SK-N-SH (cell line): ENCODE measurements at regions of chr6 and their contacts with region 1.

Region 1: GRCh38 chr6:35731736-35732532 is 4.9 kb upstream of the ARMC12 start:
- DNase-seq: peak; percentile 91
- H3K4me3 ChIP-seq: peak overlapping the region; percentile 76 to 89
- H3K27ac ChIP-seq: peak overlapping the region; percentile 92 to 98
- H3K4me1 ChIP-seq: peaks cover 5 to 34% of the 10 kb centered on the region in 2 experiments; a peak in 2 of 4 replicates
- H3K27me3 ChIP-seq: no peaks in the 10 kb centered on the region
- CTCF ChIP-seq: no peak
- EP300 ChIP-seq: peak in 1 of 2 experiments; percentile 58; a peak in 2 of 4 replicates
- RAD21 ChIP-seq: peak; percentile 27

Region 2: GRCh38 chr6:35496841-35497570 is 234.9 kb before region 1 on chr6 and contains the start of gene TEAD3:
- CTCF ChIA-PET with region 1: interaction called, 10 read pairs
- POLR2A ChIA-PET with region 1: no interaction called
- DNase-seq: peak; percentile 97
- H3K4me3 ChIP-seq: peak within 1 kb of the TSS; percentile 66 to 79
- H3K27ac ChIP-seq: peak within 1 kb of the TSS; percentile 35 to 82; a peak in 3 of 4 replicates
- H3K4me1 ChIP-seq: peaks cover 12 to 50% of the 10 kb centered on the region in 2 experiments; a peak in 2 of 4 replicates
- H3K27me3 ChIP-seq: no peaks in the 10 kb centered on the region
- CTCF ChIP-seq: peak; percentile 27
- EP300 ChIP-seq: no peak
- RAD21 ChIP-seq: no peak
- polyA plus RNA-seq, gene TEAD3: 5.2 and 7.1 TPM in 2 replicates

Region 3: DNA sequence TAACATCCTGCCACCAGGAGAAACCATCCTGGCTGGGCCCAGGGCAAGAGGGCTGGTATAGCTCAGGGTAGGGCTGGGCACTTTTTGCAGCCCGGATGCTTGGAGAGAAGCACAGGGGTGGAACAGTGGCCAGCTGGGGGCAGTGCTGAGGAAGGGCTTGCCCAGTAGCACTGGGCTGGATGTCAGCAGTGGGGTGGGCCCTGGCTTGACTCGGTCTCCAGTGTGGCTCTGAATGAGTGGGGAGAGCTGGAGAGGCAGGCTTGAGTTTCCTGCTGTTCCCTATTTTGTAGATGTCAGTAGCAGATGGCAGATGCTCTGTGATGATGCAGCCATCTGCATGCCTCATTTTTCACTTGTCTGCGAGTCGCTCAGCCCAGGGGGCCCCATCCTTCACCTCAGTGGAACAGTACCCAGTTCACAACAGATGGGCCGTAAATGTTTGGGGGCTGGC is 162.9 kb before region 1 on chr6:
- CTCF ChIA-PET with region 1: interaction called, 24 read pairs
- POLR2A ChIA-PET with region 1: no interaction called
- DNase-seq: peak; percentile 30
- H3K4me3 ChIP-seq: no peak overlapping the region; a peak in 1 of 4 replicates
- H3K27ac ChIP-seq: no peak overlapping the region
- H3K4me1 ChIP-seq: peaks cover 0 to 4% of the 10 kb centered on the region in 2 experiments; a peak in 1 of 4 replicates
- H3K27me3 ChIP-seq: peaks cover 4% of the 10 kb centered on the region
- CTCF ChIP-seq: peak; percentile 44
- EP300 ChIP-seq: no peak
- RAD21 ChIP-seq: 0 out of 2 replicates have a peak, but pooled peaks have one; percentile 9

Region 4: GRCh38 chr6:35601331-35602132 is 130.4 kb before region 1 on chr6:
- CTCF ChIA-PET with region 1: interaction called, 42 read pairs
- POLR2A ChIA-PET with region 1: no interaction called
- DNase-seq: peak; percentile 58
- H3K4me3 ChIP-seq: peak overlapping the region; percentile 33 to 47
- H3K27ac ChIP-seq: peak overlapping the region; percentile 88 to 98
- H3K4me1 ChIP-seq: peaks cover 30 to 50% of the 10 kb centered on the region in 2 experiments
- H3K27me3 ChIP-seq: no peaks in the 10 kb centered on the region
- CTCF ChIP-seq: no peak
- EP300 ChIP-seq: peak in 1 of 2 experiments; percentile 75; a peak in 2 of 4 replicates
- RAD21 ChIP-seq: no peak

Region 5: GRCh38 chr6:35681298-35681697 is 50.6 kb before region 1 on chr6:
- CTCF ChIA-PET with region 1: interaction called, 33 read pairs
- POLR2A ChIA-PET with region 1: no interaction called
- DNase-seq: no peak
- H3K4me3 ChIP-seq: no peak overlapping the region
- H3K27ac ChIP-seq: no peak overlapping the region
- H3K4me1 ChIP-seq: peaks cover 3 to 22% of the 10 kb centered on the region in 2 experiments; a peak in 3 of 4 replicates
- H3K27me3 ChIP-seq: no peaks in the 10 kb centered on the region
- CTCF ChIP-seq: no peak
- EP300 ChIP-seq: no peak
- RAD21 ChIP-seq: no peak

Region 6: DNA sequence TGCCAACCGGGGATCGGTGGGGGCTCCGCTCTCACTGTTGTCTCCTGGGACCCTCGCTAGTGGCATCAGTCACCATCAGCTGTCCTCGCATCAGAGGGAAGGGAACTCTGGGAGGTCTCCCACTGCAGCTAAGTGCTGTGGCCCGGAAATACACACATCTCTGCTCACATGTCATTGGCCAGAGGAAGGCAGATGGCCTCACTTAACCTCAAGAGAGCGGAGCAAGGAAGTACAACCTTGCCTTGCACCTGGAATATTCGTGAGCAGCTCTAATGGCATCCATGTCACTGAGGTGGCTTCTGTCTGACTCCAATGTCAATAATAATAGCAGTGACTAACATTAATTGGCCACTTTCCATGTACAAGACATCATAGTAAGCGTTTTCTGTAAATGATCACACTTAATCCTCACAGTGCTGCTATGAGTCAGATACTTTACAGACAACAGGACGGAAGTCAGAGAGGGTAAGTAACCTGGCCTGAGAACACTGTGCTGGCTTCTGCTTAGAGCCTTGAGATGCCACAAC is 79.1 kb after region 1 on chr6:
- CTCF ChIA-PET with region 1: no interaction called
- POLR2A ChIA-PET with region 1: no interaction called
- DNase-seq: no peak
- H3K4me3 ChIP-seq: no peak overlapping the region
- H3K27ac ChIP-seq: no peak overlapping the region
- H3K4me1 ChIP-seq: peaks cover 5 to 8% of the 10 kb centered on the region in 2 experiments; a peak in 2 of 4 replicates
- H3K27me3 ChIP-seq: no peaks in the 10 kb centered on the region
- CTCF ChIP-seq: no peak
- EP300 ChIP-seq: no peak
- RAD21 ChIP-seq: no peak

Region 7: DNA sequence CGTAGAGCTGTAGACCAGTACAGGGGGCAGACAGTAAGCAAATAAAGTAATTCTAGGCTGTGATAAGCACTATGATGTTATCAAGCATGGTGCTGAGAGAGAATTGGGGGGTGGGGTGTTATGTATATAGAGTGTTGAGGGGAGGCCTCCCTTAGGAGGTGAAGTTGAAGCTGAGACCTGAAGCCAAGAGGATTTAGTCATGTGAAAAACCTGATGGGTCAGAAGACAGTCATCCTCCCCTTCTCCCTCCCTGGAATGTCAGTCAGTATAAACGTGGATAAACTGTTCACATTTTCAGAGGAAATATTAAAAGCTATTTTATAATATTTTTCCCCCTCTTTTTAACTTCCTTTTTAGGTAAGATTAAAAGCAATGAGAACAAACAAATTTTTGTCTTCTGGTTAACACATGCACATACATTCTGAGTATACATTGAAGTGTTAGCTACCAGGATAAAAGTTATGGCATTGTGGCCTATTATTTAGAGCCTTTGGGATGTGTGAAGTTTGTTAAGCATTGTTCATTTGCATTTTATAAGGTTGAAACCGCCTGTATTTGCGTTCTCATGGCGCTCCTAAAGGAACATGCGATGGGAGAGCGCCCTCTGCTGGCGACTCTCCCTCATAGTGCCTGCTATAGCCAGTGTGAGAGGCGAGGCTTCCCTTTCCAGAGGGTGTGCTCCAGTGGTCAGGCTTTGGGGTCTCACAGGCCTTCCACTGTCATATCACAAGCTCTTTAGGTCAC is 363.0 kb after region 1 on chr6:
- CTCF ChIA-PET with region 1: interaction called, 11 read pairs
- POLR2A ChIA-PET with region 1: no interaction called
- DNase-seq: peak; percentile 66
- H3K4me3 ChIP-seq: peak overlapping the region in 1 of 2 experiments; percentile 39; a peak in 1 of 4 replicates
- H3K27ac ChIP-seq: no peak overlapping the region; a peak in 2 of 4 replicates
- H3K4me1 ChIP-seq: peaks cover 0 to 20% of the 10 kb centered on the region in 2 experiments; a peak in 2 of 4 replicates
- H3K27me3 ChIP-seq: no peaks in the 10 kb centered on the region
- CTCF ChIP-seq: peak; percentile 97
- EP300 ChIP-seq: no peak
- RAD21 ChIP-seq: peak; percentile 95